Naive thymus-derived CD8-positive, alpha-beta T cell (primary cell): ENCODE measurements at regions of chrX and their contacts with region 1.

Region 1: DNA sequence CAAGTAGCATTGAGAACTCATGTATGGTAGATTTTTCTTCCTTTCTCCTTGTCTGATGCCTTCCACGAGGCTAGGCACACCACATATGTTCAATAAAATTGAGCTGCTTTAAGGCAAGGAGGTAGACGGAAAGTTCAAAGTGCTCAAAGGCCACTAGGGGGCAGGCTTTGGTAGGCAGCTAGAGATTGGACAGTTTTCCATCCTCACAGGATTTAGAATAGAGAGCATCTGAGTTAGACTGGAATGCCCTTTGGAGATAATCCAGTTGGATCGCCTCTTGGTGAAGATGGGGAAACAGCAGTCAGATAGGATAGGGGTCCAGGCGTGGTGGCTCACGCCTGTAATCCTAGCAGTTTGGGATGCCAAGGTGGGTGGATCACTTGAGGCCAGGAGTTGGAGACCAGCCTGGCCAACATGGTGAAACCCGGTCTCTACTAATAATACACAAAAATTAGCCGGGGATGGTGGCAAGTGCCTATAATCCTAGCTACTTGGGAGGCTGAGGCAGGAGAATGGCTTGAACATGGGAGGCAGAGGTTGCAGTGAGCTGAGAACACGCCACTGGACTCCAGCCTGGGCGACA is 30.4 kb downstream of the ELF4 start:
- DNase-seq: peak; percentile 24 to 76 (median 52)
- ATAC-seq: no peak
- H3K4me3 Mint-ChIP-seq: peak overlapping the region in 3 of 10 donors; percentile 33 to 55 (median 38)
- H3K27ac Mint-ChIP-seq: peak overlapping the region; percentile 22 to 91 (median 82)
- H3K4me1 Mint-ChIP-seq: peaks cover 12 to 50% (median 41%) of the 10 kb centered on the region in 4 donors
- H3K27me3 Mint-ChIP-seq: no peaks in the 10 kb centered on the region

Region 2: DNA sequence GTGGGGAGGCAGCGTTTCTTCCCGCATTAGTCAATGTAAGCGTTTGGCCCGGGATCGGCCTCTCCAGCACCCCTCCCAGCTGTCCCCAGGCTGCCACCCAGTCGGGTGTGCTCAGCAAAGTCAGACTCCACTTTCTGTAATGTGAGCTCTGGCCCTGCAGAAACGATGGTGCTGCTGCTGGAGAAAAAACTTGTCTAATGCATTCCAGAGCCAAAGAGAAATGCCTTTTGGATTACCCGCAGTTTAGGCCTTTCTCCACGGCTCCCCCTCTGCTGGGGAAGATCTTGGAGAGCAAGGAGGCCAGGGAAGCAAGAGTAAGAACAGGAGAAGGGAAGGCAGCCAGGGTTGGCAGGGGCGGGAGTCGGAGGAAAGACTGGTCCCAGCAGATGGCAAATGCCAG is 24.8 kb before region 1 on chrX:
- POLR2A ChIA-PET with region 1: no interaction called
- DNase-seq: no peak
- ATAC-seq: no peak
- H3K4me3 Mint-ChIP-seq: no peak overlapping the region
- H3K27ac Mint-ChIP-seq: no peak overlapping the region
- H3K4me1 Mint-ChIP-seq: peaks cover 0 to 9% (median 2%) of the 10 kb centered on the region in 4 donors
- H3K27me3 Mint-ChIP-seq: no peaks in the 10 kb centered on the region

Region 3: GRCh38 chrX:130066975-130067615 is 12.8 kb before region 1 on chrX:
- POLR2A ChIA-PET with region 1: no interaction called
- DNase-seq: no peak
- ATAC-seq: no peak
- H3K4me3 Mint-ChIP-seq: no peak overlapping the region
- H3K27ac Mint-ChIP-seq: peak overlapping the region in 3 of 10 donors; percentile 78 to 82 (median 79)
- H3K4me1 Mint-ChIP-seq: peaks cover 0 to 5% (median 0%) of the 10 kb centered on the region in 4 donors
- H3K27me3 Mint-ChIP-seq: no peaks in the 10 kb centered on the region

Region 4: DNA sequence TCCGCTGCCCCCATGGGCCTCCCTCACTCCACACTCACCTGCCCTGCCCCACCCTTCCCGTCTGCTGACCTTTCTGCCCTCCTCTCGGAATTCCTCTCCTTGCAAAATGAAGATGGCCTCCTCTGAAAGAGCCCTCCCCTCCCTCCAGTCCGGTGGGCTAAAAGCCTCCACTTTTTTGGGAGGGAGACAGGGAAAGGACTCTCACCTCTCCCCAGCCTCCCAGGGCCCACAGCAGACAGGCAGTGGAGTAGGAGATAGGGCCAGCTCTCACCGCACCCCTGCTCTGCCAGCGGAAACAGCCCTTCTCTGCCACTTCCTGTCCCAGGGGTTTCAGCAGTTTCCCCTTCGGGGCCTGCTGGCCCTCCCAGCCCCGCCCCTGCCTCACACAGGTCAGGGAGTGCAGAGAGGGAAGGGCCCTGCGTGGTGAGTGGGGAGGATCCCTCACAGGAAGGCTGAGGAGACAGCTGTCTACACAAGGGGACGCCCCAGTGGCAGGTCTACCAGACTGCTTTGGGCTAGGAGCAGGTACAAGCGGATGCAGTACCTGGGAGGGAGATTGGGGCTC is 12.1 kb after region 1 on chrX:
- POLR2A ChIA-PET with region 1: interaction called, 12 read pairs
- DNase-seq: peak; percentile 53 to 95 (median 84)
- ATAC-seq: peak; percentile 96 to 98
- H3K4me3 Mint-ChIP-seq: peak overlapping the region; percentile 80 to 95 (median 86)
- H3K27ac Mint-ChIP-seq: peak overlapping the region; percentile 86 to 97 (median 96)
- H3K4me1 Mint-ChIP-seq: peaks cover 16 to 84% (median 58%) of the 10 kb centered on the region in 4 donors
- H3K27me3 Mint-ChIP-seq: no peaks in the 10 kb centered on the region

Region 5: DNA sequence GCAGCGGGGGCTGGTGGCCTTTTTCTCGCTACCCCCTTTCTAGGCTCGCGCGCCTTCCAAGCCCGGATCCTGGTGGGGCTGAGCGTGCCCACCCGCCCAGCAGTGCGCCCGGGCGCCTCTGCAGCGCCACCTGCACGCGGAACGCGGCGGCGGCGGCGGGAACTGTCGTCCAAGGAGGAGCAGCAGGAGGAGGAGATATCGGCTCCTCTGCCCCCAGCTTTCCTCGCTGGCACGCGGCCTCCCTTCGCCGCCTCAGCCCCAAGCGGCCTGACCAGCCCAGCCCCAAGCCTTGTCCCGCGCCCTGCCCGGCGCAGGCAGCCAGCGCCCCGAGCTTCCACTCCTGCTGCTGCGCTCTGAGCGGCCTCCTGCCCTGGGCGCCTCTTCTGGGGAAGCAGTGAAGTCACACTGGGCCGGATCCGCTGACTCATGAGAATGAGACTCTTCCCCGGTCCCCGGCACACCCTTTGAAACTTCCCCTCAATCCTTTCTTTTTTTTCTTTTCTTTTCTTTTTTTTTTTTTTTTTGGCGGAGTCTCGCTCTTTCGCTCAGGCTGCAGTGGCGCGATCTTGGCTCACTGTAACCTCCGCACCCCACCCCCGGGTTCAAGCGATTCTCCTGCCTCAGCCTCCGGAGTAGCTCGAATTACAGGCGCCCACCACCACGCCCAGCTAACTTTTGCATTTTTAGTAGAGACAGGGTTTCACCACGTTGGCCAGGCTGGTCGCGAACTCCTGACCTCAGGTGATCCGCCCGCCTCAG is 41.0 kb after region 1 on chrX:
- POLR2A ChIA-PET with region 1: interaction called, 46 read pairs
- DNase-seq: peak; percentile 48 to 76 (median 68)
- ATAC-seq: peak; percentile 92 to 95
- H3K4me3 Mint-ChIP-seq: peak overlapping the region; percentile 52 to 78 (median 67)
- H3K27ac Mint-ChIP-seq: peak overlapping the region in 1 of 10 donors; percentile 36
- H3K4me1 Mint-ChIP-seq: peaks cover 0 to 22% (median 5%) of the 10 kb centered on the region in 4 donors
- H3K27me3 Mint-ChIP-seq: no peaks in the 10 kb centered on the region